AG04449 (cell line): ENCODE measurements at regions of chr2 and their contacts with region 1.

Region 1: DNA sequence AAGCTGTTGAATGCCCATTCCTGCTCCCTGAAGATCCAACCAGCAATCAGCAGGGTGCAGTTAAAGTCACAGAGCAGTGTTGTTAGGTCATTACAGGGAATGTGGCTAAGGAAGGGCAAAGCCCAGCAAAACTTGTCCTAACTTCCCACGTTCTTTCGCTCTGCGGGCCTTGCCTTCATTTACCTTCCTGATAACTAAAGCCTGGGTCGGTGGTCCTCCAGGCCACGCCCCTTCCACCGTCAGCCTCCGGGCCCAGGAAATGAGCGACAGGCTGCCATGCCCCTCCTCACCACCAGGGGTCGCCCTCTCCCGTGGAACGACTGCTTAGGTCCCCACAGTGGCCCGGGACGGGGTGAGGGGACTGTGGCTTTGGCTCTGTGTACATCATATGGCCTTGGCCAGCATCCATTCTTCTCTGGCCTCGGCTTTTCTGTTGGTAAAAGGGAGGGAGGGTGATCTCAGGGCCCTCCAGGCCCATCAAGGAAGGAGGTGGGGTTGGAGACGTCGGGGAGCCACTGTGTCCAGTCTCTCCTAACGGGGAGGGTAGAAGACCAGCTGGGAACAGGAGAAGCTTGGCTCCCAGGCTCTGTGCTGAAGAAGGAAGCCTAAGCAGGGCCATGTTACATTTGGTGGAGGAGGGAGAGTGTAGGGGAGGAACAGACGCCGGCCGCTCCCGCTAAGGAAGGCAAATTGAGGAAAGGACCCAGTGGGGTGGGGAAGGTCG is 2.2 kb downstream of the SH2D6 start:
- DNase-seq: no peak
- H3K4me3 ChIP-seq: no peak overlapping the region
- CTCF ChIP-seq: peak; percentile 98

Region 2: DNA sequence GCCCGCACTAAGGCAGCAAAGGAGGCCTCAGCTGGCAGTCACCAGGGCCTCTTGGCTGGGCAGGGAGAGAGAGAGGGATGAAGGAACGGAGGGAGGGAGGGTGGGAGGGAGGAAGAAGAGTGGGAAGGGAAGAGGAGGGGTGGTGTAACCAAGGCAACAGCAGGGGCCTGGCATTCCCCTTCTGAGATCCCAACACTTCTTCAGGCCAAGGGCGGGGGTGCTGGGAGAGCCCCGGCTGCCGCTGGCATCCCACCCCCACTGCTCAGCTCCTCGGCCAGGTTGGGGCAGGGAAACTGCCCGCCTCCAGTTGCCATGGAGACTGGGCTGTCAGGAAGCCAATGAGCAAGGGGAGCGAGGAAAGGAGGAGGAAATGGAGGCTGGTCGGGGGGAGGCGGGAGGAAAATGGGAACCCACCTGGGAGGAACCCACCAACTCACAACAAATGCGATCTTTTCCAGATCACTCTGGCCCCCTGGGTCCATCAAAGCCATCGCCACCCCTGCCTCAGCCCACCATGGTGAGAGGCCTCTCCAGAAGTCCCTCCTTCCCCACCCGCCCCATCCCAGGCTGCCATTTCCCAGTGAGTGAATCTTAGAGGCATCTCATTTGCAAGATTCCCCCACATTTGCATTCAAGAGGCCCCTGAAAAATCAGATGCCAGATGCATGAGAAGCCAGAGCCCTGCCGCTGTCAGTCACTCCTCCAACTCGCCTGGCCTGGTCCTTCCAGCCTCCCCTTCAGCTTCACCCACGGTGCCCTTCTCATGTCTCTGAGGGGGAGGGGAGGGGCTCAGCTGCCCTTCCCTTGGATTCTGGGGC is 10.3 kb after region 1 on chr2:
- CTCF ChIA-PET with region 1: interaction called, 45 read pairs
- POLR2A ChIA-PET with region 1: interaction called, 7 read pairs
- DNase-seq: no peak
- H3K4me3 ChIP-seq: no peak overlapping the region
- CTCF ChIP-seq: no peak

Region 3: GRCh38 chr2:85437488-85438284 is 17.0 kb after region 1 on chr2:
- CTCF ChIA-PET with region 1: interaction called, 23 read pairs
- POLR2A ChIA-PET with region 1: interaction called, 3 read pairs
- DNase-seq: no peak
- H3K4me3 ChIP-seq: peak overlapping the region; percentile 45
- CTCF ChIP-seq: no peak

Region 4: DNA sequence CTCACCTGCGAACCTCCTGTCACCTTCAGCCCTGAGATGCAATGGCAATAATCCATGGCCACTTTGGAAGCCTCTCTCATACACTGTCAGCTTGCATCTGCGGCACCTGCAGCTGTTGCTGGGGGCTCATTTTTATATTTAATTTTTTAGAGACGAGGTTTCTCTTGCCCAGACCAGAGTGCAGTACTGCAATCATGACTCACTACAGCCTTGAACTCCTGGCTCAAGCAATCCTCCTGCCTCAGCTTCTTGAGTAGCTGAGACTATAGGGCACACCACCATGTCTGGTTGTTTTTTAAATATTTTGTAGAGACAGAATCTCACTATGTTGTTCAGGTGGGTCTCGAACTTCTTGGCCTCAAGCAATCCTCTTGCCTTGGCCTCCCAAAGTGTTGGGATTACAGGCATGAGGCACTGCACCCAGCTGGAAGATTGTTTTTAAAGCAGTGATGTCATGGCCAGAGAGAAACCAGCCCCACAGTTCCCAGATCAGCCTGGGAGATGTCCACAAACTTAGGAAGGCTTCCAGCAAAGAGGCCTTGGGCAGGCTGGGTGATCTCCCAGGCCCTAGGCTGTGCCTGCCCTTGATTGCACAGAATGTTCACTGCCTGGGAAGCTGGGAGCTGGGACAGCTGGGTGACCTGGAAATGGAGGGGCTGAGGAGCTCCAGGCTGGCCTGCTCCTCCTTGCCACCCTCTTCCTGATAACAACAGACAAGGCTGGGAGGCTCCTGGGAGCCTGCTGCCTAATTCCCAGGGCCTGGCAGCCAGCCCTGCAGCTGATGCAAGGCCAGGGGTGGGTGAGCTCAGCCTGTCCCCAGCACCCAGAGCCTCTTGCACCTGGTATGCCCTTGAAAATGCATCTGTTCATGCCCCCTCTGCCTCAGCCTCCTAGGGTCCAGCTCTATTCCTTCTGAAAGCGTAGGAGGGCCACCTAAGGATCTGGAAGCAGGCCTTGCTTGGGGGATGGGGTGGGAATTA is 24.9 kb after region 1 on chr2:
- CTCF ChIA-PET with region 1: interaction called, 13 read pairs
- POLR2A ChIA-PET with region 1: no interaction called
- DNase-seq: peak; percentile 50
- H3K4me3 ChIP-seq: no peak overlapping the region
- CTCF ChIP-seq: no peak

Region 5: DNA sequence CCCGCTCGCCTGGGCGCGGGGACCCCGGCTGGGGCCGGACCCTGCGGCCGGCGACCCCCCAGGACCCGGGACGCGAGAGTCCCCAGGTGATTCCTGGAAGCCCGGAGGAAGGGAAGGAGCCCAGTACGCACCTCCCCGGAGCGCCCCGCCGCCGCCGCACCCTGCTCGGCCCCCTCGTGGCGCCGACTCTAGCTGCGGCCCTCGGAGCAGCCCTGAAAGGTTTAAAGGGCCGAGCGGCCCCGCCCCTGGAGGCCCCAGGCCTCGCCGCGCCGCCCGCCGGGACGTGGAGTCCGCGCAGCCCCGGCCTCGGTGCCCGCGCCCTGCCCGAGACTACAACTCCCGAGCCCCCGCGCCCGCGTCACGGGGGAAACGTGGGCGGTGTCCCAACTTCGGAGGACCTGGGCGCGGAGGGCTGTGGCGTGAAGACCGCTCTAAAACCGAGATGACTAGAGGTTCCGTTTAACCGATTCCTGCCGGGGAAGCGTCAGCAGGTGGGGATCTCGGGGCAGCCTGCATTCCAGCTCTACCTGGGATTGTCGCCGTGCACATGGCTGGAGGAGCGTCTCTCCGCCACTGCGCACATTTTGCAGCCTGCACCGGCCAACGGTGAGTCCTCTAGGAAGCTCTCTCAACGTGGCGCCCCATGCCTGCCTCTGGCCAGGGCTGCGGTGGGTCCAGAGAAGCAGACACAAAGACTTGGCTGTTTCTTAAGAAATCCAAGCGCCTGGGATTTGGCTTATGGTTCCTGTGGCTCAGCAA is 182.0 kb after region 1 on chr2 and contains the start of gene TMEM150A:
- CTCF ChIA-PET with region 1: interaction called, 11 read pairs
- POLR2A ChIA-PET with region 1: interaction called, 3 read pairs
- DNase-seq: no peak
- H3K4me3 ChIP-seq: peak within 1 kb of the TSS; percentile 99
- CTCF ChIP-seq: peak; percentile 62

Region 6: GRCh38 chr2:85642725-85643124 is 222.0 kb after region 1 on chr2:
- CTCF ChIA-PET with region 1: interaction called, 15 read pairs
- POLR2A ChIA-PET with region 1: no interaction called
- DNase-seq: no peak
- H3K4me3 ChIP-seq: no peak overlapping the region
- CTCF ChIP-seq: no peak